SK-MEL-5 (cell line): ENCODE measurements at regions of chr10 and their contacts with region 1.

Region 1: GRCh38 chr10:58781873-58782488 is 269.3 kb downstream of the BICC1 start:
- DNase-seq: peak; percentile 63

Region 2: DNA sequence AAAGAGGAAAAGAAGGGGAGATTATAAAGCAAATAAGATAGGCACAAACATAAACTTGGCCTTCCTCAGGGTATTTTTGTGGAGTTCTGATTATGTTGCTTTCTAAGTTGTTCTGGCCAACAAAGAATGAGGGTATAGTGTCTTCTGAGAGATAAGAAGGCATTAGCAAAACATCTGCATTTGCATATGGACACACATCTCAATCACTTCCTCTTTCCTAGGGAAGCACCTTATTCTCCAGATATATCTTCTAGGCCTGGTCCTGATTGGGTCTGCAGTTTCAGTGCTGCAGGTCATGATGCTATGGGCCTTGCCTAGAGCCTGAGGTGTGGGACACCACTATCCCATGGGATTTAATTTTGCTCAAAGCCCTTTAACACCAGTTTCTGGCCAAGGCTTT is 85.7 kb after region 1 on chr10:
- in situ Hi-C with region 1: no loop called
- DNase-seq: no peak

Region 3: GRCh38 chr10:59234816-59235429 is 452.9 kb after region 1 on chr10:
- in situ Hi-C with region 1: loop called (anchors 10 kb)
- DNase-seq: peak; percentile 57